ENCODE measurements at regions of chr20 and their contacts with region 1.

Region 1: GRCh38 chr20:347640-348484 is 951 bp downstream of the NRSN2 start:
- DNase-seq: peak; percentile 97 to 98
- ATAC-seq: peak; percentile 87 to 89
- H3K4me3 ChIP-seq: peak overlapping the region; percentile 66
- H3K27ac ChIP-seq: peak overlapping the region; percentile 82 to 93
- H3K4me1 ChIP-seq: peaks cover 15% of the 10 kb centered on the region
- CTCF ChIP-seq: no peak
- EP300 ChIP-seq: no peak
- POLR2A ChIP-seq: peak; percentile 64
- RAD21 ChIP-seq: no peak

Region 2: DNA sequence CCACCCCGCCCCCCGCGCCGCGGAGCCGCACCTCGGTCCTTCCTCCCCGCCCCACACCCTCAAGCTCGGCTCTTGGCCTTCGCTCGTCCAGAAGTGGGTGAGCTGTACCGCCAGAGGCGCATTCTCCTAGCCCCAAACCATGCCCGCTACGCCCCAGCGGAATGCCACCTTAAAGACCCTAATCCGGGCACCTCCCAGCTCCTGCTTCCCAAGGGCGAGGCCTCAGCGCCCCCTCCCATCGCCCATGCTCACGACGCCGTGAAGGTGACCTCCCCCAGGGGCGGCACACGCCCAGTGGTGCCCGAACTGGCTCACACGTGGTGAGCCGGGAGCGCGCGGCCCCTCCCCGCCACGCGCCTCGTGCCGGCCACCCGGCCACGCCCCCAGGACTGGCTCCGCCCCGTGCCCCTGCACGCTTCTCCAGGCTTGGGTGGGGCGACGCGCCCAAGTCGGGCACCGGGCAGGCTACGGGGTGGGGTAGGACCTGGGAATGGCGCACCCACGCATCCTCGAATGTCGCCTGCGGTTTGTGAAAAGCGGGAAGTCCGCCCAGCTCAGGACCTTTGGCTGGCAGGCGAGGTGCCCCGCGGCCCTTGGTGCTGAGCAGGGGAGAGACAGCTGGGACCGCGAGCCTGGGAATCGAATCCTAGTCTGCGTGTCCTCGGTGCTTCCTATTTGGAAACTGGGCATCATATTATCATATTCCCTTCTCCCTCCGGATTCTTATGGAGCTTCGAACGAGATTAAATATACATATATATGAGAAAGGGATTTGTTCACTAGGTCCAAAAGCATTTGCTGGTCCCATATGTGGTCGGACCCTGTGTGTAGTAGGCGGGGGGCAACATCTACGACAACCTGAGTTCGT is 23.5 kb before region 1 on chr20:
- CTCF ChIA-PET with region 1: interaction called, 77 read pairs
- POLR2A ChIA-PET with region 1: interaction called, 30 read pairs
- DNase-seq: peak; percentile 93 to 96
- ATAC-seq: peak; percentile 50 to 81
- H3K4me3 ChIP-seq: peak overlapping the region; percentile 95
- H3K27ac ChIP-seq: peak overlapping the region; percentile 95 to 99
- H3K4me1 ChIP-seq: peaks cover 28% of the 10 kb centered on the region
- CTCF ChIP-seq: no peak; the same call in 2 of the 3 replicates
- EP300 ChIP-seq: no peak
- POLR2A ChIP-seq: peak; percentile 63
- RAD21 ChIP-seq: peak in 1 of 2 experiments; percentile 43; a peak in 2 of 5 replicates

Region 3: GRCh38 chr20:335686-336439 is 12.0 kb before region 1 on chr20:
- CTCF ChIA-PET with region 1: interaction called, 77 read pairs
- POLR2A ChIA-PET with region 1: interaction called, 15 read pairs
- DNase-seq: no peak
- ATAC-seq: no peak
- H3K4me3 ChIP-seq: no peak overlapping the region
- H3K27ac ChIP-seq: no peak overlapping the region
- H3K4me1 ChIP-seq: peaks cover 1% of the 10 kb centered on the region; the same call in 2 of the 3 replicates
- CTCF ChIP-seq: no peak
- EP300 ChIP-seq: no peak
- POLR2A ChIP-seq: no peak
- RAD21 ChIP-seq: no peak

Region 4: DNA sequence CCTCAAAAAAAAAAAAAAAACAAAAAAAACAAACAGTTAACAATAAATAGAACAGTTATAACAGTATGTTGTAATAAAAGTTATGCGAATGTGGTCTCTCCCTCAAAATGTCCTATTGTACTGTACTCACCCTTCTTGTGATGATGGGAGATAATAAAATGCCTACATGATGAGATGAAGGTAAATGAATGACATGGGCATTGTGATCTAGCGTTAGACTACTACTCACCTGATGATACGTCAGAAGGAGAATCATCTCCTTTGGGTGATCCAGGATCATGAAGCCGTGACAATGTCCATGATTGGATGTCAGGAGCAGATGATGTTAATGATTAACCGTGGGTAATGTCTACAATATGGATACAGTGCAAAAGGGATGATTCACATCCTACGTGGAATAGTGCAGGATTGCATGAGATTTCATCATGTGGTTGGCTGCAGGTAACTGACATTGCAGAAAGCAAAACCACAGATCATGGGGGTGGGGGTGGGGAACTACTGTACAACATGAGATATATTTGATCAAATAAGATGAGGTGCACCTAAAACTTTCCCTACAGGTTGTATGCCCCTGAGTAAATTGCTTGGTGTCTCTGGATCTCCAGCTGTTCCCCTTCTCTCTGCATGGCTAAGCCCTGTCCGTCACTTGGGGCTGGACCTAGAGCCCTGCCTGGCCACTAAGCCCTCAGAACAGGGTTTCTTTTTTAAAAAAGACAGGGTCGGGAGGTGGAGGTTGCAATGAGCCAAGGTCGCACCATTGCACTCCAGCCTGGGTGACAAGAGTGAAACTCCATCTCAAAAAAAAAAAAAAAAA is 54.0 kb after region 1 on chr20:
- CTCF ChIA-PET with region 1: interaction called, 8 read pairs
- POLR2A ChIA-PET with region 1: interaction called, 20 read pairs
- DNase-seq: peak; percentile 99 to 100
- ATAC-seq: peak; percentile 85 to 90
- H3K4me3 ChIP-seq: 0 out of 3 replicates have a peak overlapping the region, but pooled peaks have one; percentile 4
- H3K27ac ChIP-seq: peak overlapping the region; percentile 93 to 99
- H3K4me1 ChIP-seq: peaks cover 42% of the 10 kb centered on the region
- CTCF ChIP-seq: no peak
- EP300 ChIP-seq: peak; percentile 97 to 98; a peak in 4 of 5 replicates
- POLR2A ChIP-seq: no peak
- RAD21 ChIP-seq: peak in 1 of 2 experiments; percentile 9; a peak in 1 of 5 replicates

Region 5: DNA sequence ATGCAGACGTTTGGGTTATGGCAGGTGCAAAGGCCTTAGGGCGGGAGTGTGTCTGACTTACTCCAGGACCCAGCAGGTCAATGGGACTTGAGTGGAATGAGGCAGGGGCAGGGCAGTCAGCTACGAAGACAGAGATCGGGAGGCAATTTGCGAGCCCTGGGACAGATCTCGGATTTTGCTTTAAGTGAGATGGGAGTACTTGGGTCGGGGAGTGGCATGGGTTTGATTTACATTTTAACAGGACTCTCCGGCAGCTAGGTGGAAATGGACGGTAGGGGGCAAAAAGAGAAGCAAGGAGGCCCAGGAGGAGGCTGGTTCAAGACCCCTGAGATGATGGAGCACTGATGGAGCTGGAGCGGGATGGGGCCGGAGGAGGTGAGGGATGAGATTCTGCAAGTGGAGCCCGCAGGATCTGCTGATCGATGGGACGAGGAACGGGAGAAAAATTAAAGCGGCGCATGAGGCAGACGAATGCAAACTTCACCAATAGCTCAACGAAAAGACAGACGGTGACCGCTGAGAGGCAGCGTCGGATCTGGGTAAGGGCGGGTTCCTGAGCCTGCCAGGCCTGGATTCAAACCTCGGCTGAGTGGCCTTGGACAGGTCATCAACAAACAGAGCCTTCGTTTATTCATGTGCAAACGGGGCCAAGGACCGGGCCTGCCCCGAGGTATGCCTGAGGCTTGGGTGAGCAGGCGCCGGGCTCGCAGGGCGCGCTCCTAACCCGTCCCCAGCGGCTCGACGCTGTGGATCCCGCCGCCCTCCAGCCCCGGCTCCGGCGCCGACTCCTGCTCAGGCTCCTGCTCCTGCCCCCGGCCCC is 59.5 kb after region 1 on chr20:
- CTCF ChIA-PET with region 1: interaction called, 4 read pairs
- POLR2A ChIA-PET with region 1: interaction called, 20 read pairs
- DNase-seq: peak; percentile 91
- ATAC-seq: peak; percentile 87
- H3K4me3 ChIP-seq: peak overlapping the region; percentile 48
- H3K27ac ChIP-seq: peak overlapping the region; percentile 93 to 99
- H3K4me1 ChIP-seq: peaks cover 31% of the 10 kb centered on the region
- CTCF ChIP-seq: peak; percentile 47
- EP300 ChIP-seq: no peak
- POLR2A ChIP-seq: peak; percentile 74
- RAD21 ChIP-seq: peak; percentile 26 to 54; a peak in 4 of 5 replicates